ENCODE measurements at regions of chr6 and their contacts with region 1.

Region 1: DNA sequence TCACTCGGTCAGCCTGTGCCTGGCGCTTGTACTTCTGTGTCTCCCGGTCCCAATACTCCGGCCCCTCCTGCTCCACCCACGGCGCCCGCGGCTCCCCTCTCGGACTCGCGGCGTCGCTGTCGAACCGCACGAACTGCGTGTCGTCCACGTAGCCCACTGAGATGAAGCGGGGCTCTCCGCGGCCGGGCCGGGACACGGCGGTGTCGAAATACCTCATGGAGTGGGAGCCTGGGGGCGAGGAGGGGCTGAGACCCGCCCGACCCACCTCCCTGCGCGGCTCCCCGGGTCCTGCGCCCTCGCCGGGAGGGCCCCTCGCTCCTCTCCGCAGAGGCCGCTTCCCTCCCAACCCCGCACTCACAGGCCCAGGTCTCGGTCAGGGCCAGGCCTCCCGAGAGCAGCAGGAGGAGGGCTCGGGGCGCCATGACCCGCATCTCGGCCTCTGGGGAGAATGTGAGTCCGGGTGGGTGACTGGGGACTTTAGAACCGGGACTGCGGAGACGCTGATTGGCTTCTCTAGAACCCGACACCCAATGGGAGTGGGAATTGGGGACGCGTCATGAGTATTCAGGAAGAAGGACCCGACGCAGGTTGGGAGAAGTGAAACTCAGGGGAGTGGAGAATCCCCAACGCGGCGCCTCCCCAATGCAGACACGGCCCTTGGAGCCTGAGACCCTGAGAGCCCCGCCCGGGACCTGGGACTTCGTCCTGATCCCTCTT is at the start of gene HLA-C:
- DNase-seq: peak; percentile 85 to 93
- ATAC-seq: peak; percentile 99 to 100
- H3K4me3 ChIP-seq: peak within 1 kb of the TSS; percentile 60 to 97 (median 80)
- H3K27ac ChIP-seq: peak within 1 kb of the TSS; percentile 75 to 99 (median 88)
- H3K4me1 ChIP-seq: peaks cover 0 to 4% of the 10 kb centered on the region in 2 donors
- H3K27me3 ChIP-seq: no peaks in the 10 kb centered on the region
- CTCF ChIP-seq: no peak
- POLR2A ChIP-seq: peak; percentile 63 to 81
- total RNA-seq, gene HLA-C: 73.4 to 267 (median 133) TPM

Region 2: DNA sequence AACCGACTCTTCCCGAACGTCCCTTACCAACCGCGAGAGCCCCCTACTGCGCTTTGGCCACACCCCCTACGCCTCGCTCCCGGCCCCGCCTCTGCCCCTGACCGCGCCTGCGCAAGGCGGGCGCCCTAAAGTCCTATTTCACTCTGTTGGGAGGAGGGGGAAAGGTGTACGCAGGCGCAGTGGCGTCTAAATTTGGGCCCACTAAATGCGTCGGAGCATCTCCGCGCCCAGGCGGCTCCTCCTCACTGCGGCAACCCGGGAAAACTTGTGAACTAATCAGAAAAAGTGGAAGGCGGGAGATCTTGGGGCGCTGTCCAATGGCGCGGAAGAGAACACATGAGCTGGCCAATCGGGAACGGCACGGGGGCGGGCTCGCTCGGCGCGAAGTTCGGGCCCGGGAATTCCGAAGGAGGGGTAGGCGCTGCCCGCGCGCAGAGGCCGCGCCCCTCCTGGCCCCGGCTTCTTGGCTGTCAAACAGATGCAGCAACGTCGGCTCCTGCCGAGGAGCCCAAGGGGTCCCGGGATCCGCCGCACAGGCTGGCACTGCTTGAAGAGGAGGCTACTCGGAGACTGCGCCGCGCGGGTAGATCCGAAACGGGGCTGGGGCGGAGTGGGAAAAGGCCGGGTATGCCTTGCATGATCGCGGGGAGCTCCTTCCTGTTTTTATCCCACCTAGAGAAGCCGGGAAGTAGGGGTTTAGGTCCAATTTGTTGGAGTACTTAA is 113.5 kb before region 1 on chr6 and contains the start of gene TCF19:
- in situ Hi-C with region 1: no loop called
- intact Hi-C with region 1: loop called (anchors 5 kb)
- DNase-seq: peak; percentile 98 to 99
- ATAC-seq: peak; percentile 98
- H3K4me3 ChIP-seq: peak within 1 kb of the TSS; percentile 60 to 86 (median 78)
- H3K27ac ChIP-seq: peak within 1 kb of the TSS; percentile 82 to 89 (median 86)
- H3K4me1 ChIP-seq: peaks cover 20 to 26% of the 10 kb centered on the region in 2 donors
- H3K27me3 ChIP-seq: no peaks in the 10 kb centered on the region
- CTCF ChIP-seq: no peak
- POLR2A ChIP-seq: peak; percentile 37 to 54
- total RNA-seq, gene TCF19: 1.5 to 5.1 (median 2.6) TPM

Region 3: DNA sequence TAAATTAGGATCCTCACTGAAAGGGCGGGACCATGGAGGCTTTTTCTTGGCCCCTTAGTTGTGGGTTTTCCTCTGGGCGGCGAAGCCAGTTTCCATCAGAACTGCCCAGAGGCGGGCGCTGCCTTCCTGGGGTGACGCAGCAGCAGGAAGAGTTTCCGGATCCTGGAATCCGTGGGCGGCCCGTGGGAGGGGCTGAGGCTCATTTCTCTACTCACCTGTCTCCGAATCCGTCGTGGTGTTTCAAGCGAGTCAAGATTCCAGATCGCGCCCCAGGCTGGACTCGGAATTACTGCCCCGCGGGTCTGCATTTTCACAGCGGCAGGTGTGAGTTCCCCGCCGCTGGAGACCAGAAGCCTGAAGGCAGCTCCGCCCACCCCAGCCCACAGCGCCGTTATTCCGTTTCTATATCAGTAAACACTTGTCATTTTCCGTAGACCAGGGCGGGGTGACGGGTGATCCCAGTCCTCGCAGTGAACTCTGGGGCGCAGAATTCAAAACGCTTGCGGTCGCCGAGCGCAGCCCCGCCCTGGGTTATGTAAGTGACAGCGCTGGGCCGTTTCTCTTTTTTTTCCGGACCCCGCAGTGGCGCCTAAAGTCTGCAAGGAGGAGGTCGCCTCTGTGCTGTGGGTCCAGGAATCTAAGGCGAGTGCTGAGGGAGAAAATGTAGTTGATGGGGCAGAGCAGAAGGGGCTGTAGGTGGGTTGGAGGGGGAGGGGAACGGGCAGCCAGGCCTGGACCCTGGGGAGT is 74.1 kb before region 1 on chr6:
- in situ Hi-C with region 1: no loop called
- intact Hi-C with region 1: loop called (anchors 1 kb)
- DNase-seq: peak; percentile 82 to 91
- ATAC-seq: peak; percentile 89 to 92
- H3K4me3 ChIP-seq: peak overlapping the region; percentile 57 to 85 (median 74)
- H3K27ac ChIP-seq: peak overlapping the region; percentile 90 to 93 (median 92)
- H3K4me1 ChIP-seq: peaks cover under 1 to 20% of the 10 kb centered on the region in 2 donors
- H3K27me3 ChIP-seq: no peaks in the 10 kb centered on the region
- CTCF ChIP-seq: no peak
- POLR2A ChIP-seq: peak; percentile 81 to 86

Region 4: GRCh38 chr6:31204751-31205145 is 67.1 kb before region 1 on chr6:
- in situ Hi-C with region 1: loop called in 1 of 4 experiments (anchors 5 kb)
- intact Hi-C with region 1: no loop called
- DNase-seq: no peak
- ATAC-seq: no peak
- H3K4me3 ChIP-seq: peak overlapping the region in 2 of 4 donors; percentile 54 to 61
- H3K27ac ChIP-seq: peak overlapping the region; percentile 76 to 83 (median 80)
- H3K4me1 ChIP-seq: peaks cover 15 to 17% of the 10 kb centered on the region in 2 donors
- H3K27me3 ChIP-seq: no peaks in the 10 kb centered on the region
- CTCF ChIP-seq: no peak
- POLR2A ChIP-seq: no peak

Region 5: GRCh38 chr6:31308845-31309175 is 37.0 kb after region 1 on chr6:
- in situ Hi-C with region 1: no loop called
- intact Hi-C with region 1: no loop called
- DNase-seq: no peak
- ATAC-seq: no peak
- H3K4me3 ChIP-seq: peak overlapping the region; percentile 34 to 61 (median 43)
- H3K27ac ChIP-seq: no peak overlapping the region
- H3K4me1 ChIP-seq: peaks cover 0 to 8% of the 10 kb centered on the region in 2 donors
- H3K27me3 ChIP-seq: peaks cover 4 to 33% (median 25%) of the 10 kb centered on the region in 3 donors
- CTCF ChIP-seq: no peak
- POLR2A ChIP-seq: no peak

Region 6: DNA sequence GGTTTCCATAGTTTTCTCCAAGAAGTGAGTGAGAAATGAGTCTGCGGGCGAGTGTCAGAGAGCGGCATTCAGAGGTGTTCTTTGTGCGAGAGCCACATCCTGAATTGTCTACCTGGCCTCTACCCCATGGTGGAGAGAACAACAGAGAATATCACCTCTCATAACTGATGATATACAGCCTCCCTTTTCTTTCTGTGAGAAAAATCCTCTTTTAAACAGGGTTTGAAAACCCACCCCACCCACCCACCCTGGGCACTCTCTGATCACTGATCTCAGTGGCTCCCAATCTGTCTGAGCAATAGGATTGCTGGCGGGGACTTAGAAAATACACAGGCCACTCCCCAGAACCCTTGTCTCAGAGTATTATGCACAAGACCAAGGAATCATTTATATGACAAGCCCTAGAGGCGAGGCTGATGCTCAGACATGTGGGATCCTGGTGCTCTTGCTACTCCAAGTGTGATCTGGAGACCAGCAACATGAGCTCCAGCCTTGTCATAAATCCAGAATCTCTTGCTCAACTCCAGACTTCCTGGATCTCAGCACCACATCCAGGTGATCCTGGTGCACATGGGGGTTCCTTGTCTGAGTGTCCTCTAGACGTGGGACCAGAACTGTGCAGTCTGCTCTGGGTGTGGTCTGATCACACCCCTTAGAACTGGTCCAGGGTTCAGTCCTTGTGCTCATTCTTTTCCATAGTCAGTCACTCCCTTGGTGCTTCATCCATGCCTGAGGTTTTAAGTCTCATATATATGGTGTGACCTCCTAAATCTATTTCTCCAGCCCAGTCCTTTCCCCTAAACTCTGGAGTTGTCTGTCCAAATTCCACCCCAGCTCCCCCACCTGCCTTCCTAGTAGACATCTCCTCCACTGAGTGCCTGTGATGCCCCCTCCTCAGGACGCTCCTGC is 79.9 kb after region 1 on chr6:
- in situ Hi-C with region 1: loop called in 2 of 4 experiments (anchors 5 to 10 kb)
- intact Hi-C with region 1: loop called (anchors 2 kb)
- DNase-seq: no peak
- ATAC-seq: no peak
- H3K4me3 ChIP-seq: no peak overlapping the region
- H3K27ac ChIP-seq: no peak overlapping the region
- H3K4me1 ChIP-seq: no peaks in the 10 kb centered on the region
- H3K27me3 ChIP-seq: peaks cover 0 to 3% (median 0%) of the 10 kb centered on the region in 3 donors
- CTCF ChIP-seq: no peak
- POLR2A ChIP-seq: no peak

Region 7: DNA sequence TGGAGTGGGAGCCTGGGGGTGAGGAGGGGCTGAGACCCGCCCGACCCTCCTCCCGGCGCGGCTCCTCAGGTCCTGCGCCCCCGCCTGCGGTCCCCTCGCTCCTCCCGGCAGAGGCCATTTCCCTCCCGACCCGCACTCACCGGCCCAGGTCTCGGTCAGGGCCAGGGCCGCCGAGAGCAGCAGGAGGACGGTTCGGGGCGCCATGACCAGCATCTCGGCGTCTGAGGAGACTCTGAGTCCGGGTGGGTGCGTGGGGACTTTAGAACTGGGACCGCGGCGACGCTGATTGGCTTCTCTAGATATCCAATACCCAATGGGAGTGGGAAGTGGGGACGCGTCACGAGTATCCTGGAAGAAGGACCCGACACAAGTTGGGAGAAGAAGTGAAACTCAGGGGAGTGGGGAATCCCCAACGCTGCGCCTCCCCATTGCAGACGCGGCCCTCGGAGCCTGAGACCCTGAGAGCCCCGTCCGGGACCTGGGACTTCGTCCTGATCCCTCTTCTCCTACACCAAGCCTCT is 85.2 kb after region 1 on chr6 and contains the start of gene HLA-B:
- in situ Hi-C with region 1: loop called in 2 of 4 experiments (anchors 5 to 10 kb)
- intact Hi-C with region 1: loop called (anchors 2 kb)
- DNase-seq: peak; percentile 52 to 77
- ATAC-seq: peak; percentile 97 to 99
- H3K4me3 ChIP-seq: peak within 1 kb of the TSS; percentile 63 to 90 (median 68)
- H3K27ac ChIP-seq: peak within 1 kb of the TSS; percentile 68 to 92 (median 75)
- H3K4me1 ChIP-seq: no peaks in the 10 kb centered on the region
- H3K27me3 ChIP-seq: peaks cover 0 to 14% (median 3%) of the 10 kb centered on the region in 3 donors
- CTCF ChIP-seq: no peak
- POLR2A ChIP-seq: peak in 1 of 2 donors; percentile 59
- total RNA-seq, gene HLA-B: 182 to 300 (median 192) TPM

Region 8: DNA sequence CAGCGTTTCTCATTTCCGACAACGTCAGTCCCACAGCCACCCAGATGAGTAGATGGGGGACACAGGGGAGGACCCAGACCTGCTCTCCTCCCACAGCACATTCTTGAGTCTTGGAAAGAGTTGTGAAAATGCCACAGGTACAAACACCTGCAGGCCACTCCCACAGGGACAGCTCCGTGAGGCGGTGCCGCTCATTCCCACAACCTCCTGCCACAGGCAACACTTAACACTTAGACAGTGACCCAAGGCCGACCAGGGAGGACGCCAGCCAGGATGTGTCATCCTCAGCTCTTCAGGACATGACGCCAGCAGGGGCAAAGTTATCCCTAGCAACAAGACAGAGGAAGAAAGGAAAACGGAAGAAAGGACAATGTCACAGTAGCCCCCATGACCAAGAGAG is 108.1 kb after region 1 on chr6:
- in situ Hi-C with region 1: loop called in 1 of 4 experiments (anchors 10 kb)
- intact Hi-C with region 1: no loop called
- DNase-seq: no peak
- ATAC-seq: no peak
- H3K4me3 ChIP-seq: no peak overlapping the region
- H3K27ac ChIP-seq: no peak overlapping the region
- H3K4me1 ChIP-seq: no peaks in the 10 kb centered on the region
- H3K27me3 ChIP-seq: peaks cover 9 to 12% (median 11%) of the 10 kb centered on the region in 3 donors
- CTCF ChIP-seq: no peak
- POLR2A ChIP-seq: no peak

Region 9: GRCh38 chr6:31407699-31408098 is 135.9 kb after region 1 on chr6:
- in situ Hi-C with region 1: no loop called
- intact Hi-C with region 1: no loop called
- DNase-seq: no peak
- ATAC-seq: no peak
- H3K4me3 ChIP-seq: no peak overlapping the region
- H3K27ac ChIP-seq: no peak overlapping the region
- H3K4me1 ChIP-seq: peaks cover 18 to 20% of the 10 kb centered on the region in 2 donors
- H3K27me3 ChIP-seq: no peaks in the 10 kb centered on the region
- CTCF ChIP-seq: no peak
- POLR2A ChIP-seq: no peak